ENCODE measurements at regions of chr6 and their contacts with region 1.

Region 1: GRCh38 chr6:44074439-44075136 is 52.7 kb downstream of the MRPL14 start:
- DNase-seq: peak in 1 of 2 donors; percentile 83
- H3K4me3 ChIP-seq: peak overlapping the region in 1 of 2 donors; percentile 71
- H3K27ac ChIP-seq: peak overlapping the region in 1 of 2 donors; percentile 54
- H3K4me1 ChIP-seq: peaks cover 4 to 26% of the 10 kb centered on the region in 2 donors
- H3K27me3 ChIP-seq: no peaks in the 10 kb centered on the region
- CTCF ChIP-seq: peak; percentile 85 to 94 (median 86)

Region 2: DNA sequence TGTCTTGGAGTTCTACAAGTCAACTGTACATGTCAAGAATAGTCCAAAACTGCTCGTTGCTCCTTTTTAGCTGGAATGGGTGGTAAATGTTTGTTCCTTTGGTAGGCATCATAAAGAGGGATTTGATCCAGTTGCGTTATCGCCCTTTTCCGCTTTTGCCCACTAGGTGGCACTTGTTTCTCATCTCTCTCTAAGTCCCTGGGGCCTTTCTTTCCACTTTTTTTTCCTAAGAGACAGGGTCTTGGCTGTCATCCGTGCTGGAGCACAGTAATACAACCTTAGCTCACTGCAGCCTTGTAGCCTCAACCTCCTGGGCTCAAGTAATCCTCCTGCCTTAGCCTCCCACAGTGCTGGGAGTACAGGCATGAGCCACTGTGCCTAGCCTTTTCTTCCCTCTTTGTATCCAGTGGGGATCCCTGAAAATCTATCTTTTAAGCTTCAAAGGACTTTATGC is 466.3 kb before region 1 on chr6:
- intact Hi-C with region 1: loop called (anchors 2 kb)
- DNase-seq: peak in 1 of 2 donors; percentile 80
- H3K4me3 ChIP-seq: no peak overlapping the region
- H3K27ac ChIP-seq: no peak overlapping the region
- H3K4me1 ChIP-seq: no peaks in the 10 kb centered on the region
- H3K27me3 ChIP-seq: no peaks in the 10 kb centered on the region
- CTCF ChIP-seq: peak; percentile 35 to 76 (median 71)

Region 3: DNA sequence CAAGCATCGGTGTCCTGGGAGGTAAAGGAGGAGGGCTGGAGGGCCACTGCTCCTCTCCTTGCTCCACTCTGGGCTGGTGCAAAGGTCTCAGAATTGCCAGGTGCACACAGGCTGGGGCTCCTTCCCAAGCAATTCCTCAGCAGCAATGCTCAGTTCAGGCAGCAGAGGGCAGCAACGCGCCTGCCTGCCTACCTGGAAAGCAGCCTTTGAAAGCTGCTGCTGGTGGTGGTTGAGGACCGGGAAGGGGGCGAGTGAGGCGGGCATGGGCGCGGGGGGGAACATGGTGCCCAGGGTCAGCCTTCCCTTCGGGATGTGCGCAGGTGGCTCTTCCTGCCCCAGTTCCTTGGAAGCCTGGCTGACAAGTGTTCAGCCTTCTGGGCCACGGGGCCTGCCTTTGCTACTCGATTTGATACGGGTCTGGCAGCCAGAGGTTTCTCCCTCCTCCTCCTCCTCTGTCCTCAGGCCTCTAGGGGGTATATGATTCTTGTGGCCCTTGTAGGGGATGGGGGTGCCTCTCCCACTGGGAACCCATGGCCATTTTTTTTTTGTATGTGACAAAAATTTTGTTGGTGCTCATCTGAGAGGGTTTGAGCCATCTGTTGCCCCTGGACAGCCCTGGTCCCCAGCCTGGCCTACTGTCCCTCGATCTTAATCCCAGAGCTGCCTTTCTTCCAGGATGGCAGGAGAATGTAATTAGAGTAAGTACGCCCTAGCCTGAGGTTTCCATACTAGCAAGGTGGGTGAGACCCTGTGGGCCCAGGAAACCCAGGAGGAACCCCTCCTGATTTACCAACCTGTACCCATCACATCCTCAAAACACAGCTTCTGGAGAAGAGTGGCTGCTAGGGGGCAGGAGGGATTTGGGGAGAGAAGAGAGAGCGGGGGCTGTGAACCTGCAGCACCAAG is 407.1 kb before region 1 on chr6:
- intact Hi-C with region 1: loop called (anchors 1 kb)
- DNase-seq: peak; percentile 38 to 90
- H3K4me3 ChIP-seq: peak overlapping the region in 1 of 2 donors; percentile 35
- H3K27ac ChIP-seq: peak overlapping the region; percentile 62 to 79
- H3K4me1 ChIP-seq: peaks cover 22 to 29% of the 10 kb centered on the region in 2 donors
- H3K27me3 ChIP-seq: no peaks in the 10 kb centered on the region
- CTCF ChIP-seq: peak; percentile 91 to 98 (median 95)

Region 4: DNA sequence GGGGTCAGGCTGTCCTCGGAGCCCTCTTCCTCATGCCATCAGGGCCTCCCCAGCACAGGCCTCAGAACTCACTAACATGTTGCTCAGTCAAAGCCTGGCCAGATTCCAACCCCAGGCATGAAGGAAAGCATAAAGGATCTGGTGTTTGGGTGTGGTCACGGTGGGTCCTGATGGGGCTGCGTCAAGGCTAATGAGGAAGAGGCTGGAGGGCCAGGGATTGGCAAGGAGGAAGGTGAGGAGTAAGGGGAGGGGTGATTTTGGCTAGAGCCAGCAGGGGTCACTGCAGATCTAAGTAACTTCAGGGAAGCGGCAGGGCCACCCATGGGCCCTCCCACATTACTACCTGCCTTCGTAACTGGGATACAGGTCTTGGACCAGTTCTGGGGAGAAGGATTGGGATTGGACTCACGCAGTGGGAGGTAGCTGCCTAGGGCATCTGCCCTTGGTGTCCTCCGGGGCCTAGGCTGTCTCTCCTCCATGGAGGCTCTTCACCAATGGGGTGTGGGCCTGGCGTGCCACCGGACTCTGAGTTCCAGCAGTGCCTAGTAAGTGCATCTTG is 350.8 kb before region 1 on chr6:
- intact Hi-C with region 1: loop called (anchors 2 kb)
- DNase-seq: no peak
- H3K4me3 ChIP-seq: no peak overlapping the region
- H3K27ac ChIP-seq: no peak overlapping the region
- H3K4me1 ChIP-seq: no peaks in the 10 kb centered on the region
- H3K27me3 ChIP-seq: no peaks in the 10 kb centered on the region
- CTCF ChIP-seq: peak; percentile 6 to 36 (median 32)

Region 5: DNA sequence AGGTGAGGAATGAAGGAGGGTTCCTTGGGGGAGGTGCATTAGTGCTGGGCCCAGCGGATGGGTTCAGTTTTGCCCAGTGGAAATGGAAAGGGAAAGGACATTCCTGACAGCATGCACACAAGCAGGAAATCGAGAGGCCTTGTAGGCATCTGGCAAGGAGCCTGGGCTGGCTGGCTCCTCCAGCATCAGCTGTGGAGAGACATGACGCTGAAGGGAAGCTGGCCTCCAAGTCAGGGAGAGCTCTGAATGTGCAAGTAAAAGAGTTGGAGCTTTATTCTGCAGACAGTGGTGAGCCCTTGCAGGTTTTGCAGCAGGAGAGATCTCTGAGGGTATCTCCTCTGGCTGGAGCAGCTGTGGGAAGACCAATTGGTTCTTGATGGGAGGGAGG is 101.7 kb before region 1 on chr6:
- intact Hi-C with region 1: loop called (anchors 5 kb)
- DNase-seq: peak; percentile 52 to 88
- H3K4me3 ChIP-seq: no peak overlapping the region
- H3K27ac ChIP-seq: peak overlapping the region; percentile 75 to 87
- H3K4me1 ChIP-seq: peaks cover 0 to 17% of the 10 kb centered on the region in 2 donors
- H3K27me3 ChIP-seq: no peaks in the 10 kb centered on the region
- CTCF ChIP-seq: no peak

Region 6: GRCh38 chr6:44002593-44003344 is 71.8 kb before region 1 on chr6:
- intact Hi-C with region 1: loop called (anchors 1 kb)
- DNase-seq: peak in 1 of 2 donors; percentile 72
- H3K4me3 ChIP-seq: peak overlapping the region; percentile 48 to 49
- H3K27ac ChIP-seq: no peak overlapping the region
- H3K4me1 ChIP-seq: peaks cover 4% of the 10 kb centered on the region in 2 donors
- H3K27me3 ChIP-seq: peaks cover 4% of the 10 kb centered on the region
- CTCF ChIP-seq: peak; percentile 3 to 39 (median 7)

Region 7: DNA sequence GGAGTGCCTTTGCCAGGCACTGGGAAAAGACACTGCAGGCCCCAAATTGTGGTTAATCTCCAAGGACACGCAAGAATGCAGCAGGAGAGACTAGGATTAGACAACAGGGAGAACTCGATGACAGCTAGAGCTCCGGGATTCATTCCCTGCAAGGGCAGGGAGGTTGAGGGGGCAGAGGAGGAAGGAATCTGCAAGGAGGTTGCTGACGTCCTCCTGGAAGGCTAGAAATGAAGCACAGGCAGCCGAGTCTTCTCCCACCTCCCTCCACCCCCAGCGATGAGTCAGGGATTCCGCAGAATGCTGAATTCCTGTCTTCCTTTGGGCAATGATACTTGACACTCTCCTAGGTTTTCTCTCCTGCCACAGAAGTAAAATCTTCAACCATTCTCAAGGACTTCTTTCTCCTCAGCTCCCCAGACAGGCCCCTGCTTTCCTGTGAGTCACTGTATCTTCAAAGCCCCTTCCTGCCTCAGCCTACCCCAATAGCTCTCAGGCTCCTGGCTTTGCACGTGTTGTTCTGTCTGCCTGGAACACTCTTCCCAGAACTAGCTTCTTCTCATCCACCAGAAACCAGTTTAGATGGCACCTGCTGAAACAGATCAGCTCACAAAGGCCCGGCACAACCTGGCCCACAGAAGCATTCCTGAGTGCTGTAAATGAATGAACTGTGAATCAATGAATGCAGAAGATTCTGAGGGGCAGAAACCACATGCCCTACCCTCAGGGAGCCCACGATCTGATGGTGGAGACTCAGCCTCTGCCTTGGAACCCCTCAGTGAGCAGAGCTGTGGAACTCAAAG is 32.9 kb before region 1 on chr6:
- intact Hi-C with region 1: no loop called
- DNase-seq: no peak
- H3K4me3 ChIP-seq: no peak overlapping the region
- H3K27ac ChIP-seq: no peak overlapping the region
- H3K4me1 ChIP-seq: peaks cover 3 to 12% of the 10 kb centered on the region in 2 donors
- H3K27me3 ChIP-seq: no peaks in the 10 kb centered on the region
- CTCF ChIP-seq: no peak

Region 8: GRCh38 chr6:44058617-44059358 is 15.8 kb before region 1 on chr6:
- intact Hi-C with region 1: loop called (anchors 2 kb)
- DNase-seq: peak; percentile 90 to 96
- H3K4me3 ChIP-seq: peak overlapping the region in 1 of 2 donors; percentile 14
- H3K27ac ChIP-seq: peak overlapping the region; percentile 86 to 91
- H3K4me1 ChIP-seq: peaks cover 29 to 42% of the 10 kb centered on the region in 2 donors
- H3K27me3 ChIP-seq: no peaks in the 10 kb centered on the region
- CTCF ChIP-seq: no peak

Measured in ascending aorta (tissue), 2 donors.